Prostate gland (tissue), 2 donors: ENCODE measurements at regions of chr6 and their contacts with region 1.

Region 1: GRCh38 chr6:56637640-56638039 is 5.0 kb downstream of the DST start:
- DNase-seq: peak; percentile 37
- H3K4me3 ChIP-seq: no peak overlapping the region
- H3K27ac ChIP-seq: no peak overlapping the region
- H3K4me1 ChIP-seq: no peaks in the 10 kb centered on the region
- H3K27me3 ChIP-seq: no peaks in the 10 kb centered on the region
- CTCF ChIP-seq: peak; percentile 19 to 77 (median 74)
- POLR2A ChIP-seq: no peak

Region 2: DNA sequence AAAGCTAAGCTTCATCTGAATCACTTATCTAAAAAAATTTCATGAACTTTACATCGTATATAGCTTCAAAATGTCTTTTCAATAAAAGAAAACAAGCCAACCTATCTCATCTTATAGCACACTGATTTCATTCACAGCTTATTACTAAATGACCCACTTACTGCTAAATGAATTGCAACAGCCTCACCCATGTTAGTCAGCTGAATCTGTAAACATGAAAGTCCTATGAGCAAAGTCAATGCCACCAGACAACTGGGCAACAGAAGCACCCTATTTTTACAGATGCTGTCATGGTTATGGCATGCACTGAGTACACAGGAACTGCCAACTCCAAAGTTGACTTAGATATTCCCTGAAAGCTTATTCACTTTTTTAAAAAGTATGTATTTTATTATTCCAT is 46.2 kb after region 1 on chr6:
- intact Hi-C with region 1: no loop called
- DNase-seq: peak; percentile 51
- H3K4me3 ChIP-seq: no peak overlapping the region
- H3K27ac ChIP-seq: no peak overlapping the region
- H3K4me1 ChIP-seq: no peaks in the 10 kb centered on the region
- H3K27me3 ChIP-seq: no peaks in the 10 kb centered on the region
- CTCF ChIP-seq: no peak
- POLR2A ChIP-seq: no peak

Region 3: GRCh38 chr6:56699066-56699654 is 61.5 kb after region 1 on chr6:
- intact Hi-C with region 1: loop called (anchors 1 kb)
- DNase-seq: no peak
- H3K4me3 ChIP-seq: no peak overlapping the region
- H3K27ac ChIP-seq: no peak overlapping the region
- H3K4me1 ChIP-seq: no peaks in the 10 kb centered on the region
- H3K27me3 ChIP-seq: no peaks in the 10 kb centered on the region
- CTCF ChIP-seq: peak in 3 of 4 experiments; percentile 60 to 74 (median 69)
- POLR2A ChIP-seq: no peak

Region 4: GRCh38 chr6:56851541-56852259 is 214.1 kb after region 1 on chr6:
- intact Hi-C with region 1: loop called (anchors 5 kb)
- DNase-seq: peak; percentile 18
- H3K4me3 ChIP-seq: peak overlapping the region; percentile 13 to 25
- H3K27ac ChIP-seq: no peak overlapping the region
- H3K4me1 ChIP-seq: no peaks in the 10 kb centered on the region
- H3K27me3 ChIP-seq: no peaks in the 10 kb centered on the region
- CTCF ChIP-seq: peak in 3 of 4 experiments; percentile 32 to 59 (median 54)
- POLR2A ChIP-seq: no peak